Right cardiac atrium (tissue), 5 donors: ENCODE measurements at regions of chr9 and their contacts with region 1.

Region 1: GRCh38 chr9:127503947-127504782 is 52.9 kb downstream of the LRSAM1 start:
- DNase-seq: peak; percentile 88 to 97 (median 95)
- ATAC-seq: peak; percentile 78 to 79
- H3K4me3 ChIP-seq: no peak overlapping the region
- H3K27ac ChIP-seq: no peak overlapping the region
- H3K4me1 ChIP-seq: no peaks in the 10 kb centered on the region
- H3K27me3 ChIP-seq: no peaks in the 10 kb centered on the region

Region 2: DNA sequence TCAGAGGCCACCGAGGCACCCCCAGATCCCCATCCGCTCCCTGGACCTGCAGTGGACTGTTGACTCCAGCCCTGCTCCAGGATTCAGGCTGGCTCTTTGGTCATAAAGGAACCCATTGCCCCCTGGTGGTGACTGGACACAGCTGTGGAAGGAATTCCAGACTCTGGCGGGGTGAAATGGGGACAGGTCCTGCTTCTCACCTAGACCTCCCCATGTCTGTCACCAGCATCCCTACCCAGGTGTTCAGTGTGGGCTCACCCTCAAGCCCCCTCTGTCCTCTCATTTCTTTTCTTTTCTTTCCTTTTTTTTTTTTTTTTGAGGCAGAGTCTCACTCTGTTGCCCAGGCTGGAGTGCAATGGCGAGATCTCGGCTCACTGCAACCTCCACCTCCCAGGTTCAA is 82.4 kb after region 1 on chr9:
- intact Hi-C with region 1: loop called (anchors 1 to 2 kb)
- DNase-seq: peak; percentile 82 to 90 (median 87)
- ATAC-seq: peak; percentile 90
- H3K4me3 ChIP-seq: no peak overlapping the region
- H3K27ac ChIP-seq: no peak overlapping the region
- H3K4me1 ChIP-seq: no peaks in the 10 kb centered on the region
- H3K27me3 ChIP-seq: no peaks in the 10 kb centered on the region

Region 3: GRCh38 chr9:127723450-127723849 is 219.3 kb after region 1 on chr9:
- intact Hi-C with region 1: loop called in 1 of 4 experiments (anchors 5 kb)
- DNase-seq: peak in 2 of 3 donors; percentile 46 to 57
- ATAC-seq: peak in 1 of 2 donors; percentile 7
- H3K4me3 ChIP-seq: no peak overlapping the region
- H3K27ac ChIP-seq: no peak overlapping the region
- H3K4me1 ChIP-seq: no peaks in the 10 kb centered on the region
- H3K27me3 ChIP-seq: no peaks in the 10 kb centered on the region

Region 4: DNA sequence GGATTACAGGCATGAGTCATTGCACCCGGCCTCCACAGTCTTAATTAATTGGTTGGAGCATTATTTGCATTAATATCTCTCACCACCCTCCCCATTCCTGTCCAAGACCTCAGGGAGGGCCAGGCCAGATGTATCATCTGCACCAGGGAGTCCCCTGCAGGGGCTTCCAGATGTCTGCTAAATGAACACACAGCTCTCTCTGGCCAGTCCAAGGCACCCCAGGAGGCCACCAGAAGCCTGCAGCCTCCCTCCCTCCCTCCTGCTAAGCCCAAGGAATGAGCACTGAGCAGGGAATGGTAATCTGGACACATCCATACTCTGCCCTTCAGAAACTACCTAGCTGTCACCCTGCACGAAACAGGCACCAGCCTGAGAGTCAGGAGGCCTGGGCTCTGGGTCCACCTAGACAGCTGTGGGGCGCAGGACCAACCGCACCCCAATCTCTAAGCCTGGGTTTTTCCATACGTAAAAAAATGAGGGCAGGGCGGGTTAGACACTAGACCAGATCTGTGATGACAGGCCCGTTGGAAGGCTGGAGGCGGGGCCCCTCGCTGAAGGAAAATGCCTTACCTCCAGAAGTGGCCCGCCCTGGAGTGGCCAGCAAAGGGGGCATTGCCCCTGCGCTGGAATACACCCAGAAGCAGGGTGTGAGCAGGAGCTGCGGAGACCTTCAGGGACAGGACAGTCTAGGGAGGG is 678.9 kb after region 1 on chr9:
- intact Hi-C with region 1: no loop called
- DNase-seq: peak in 1 of 3 donors; percentile 32
- ATAC-seq: peak in 1 of 2 donors; percentile 18
- H3K4me3 ChIP-seq: no peak overlapping the region
- H3K27ac ChIP-seq: no peak overlapping the region
- H3K4me1 ChIP-seq: no peaks in the 10 kb centered on the region
- H3K27me3 ChIP-seq: no peaks in the 10 kb centered on the region